ENCODE measurements at regions of chr15 and their contacts with region 1.

Region 1: GRCh38 chr15:76931397-76932007 is at the start of gene RCN2:
- DNase-seq: peak; percentile 98
- H3K4me3 Mint-ChIP-seq: peak within 1 kb of the TSS; percentile 81
- H3K27ac Mint-ChIP-seq: peak within 1 kb of the TSS; percentile 77
- H3K4me1 Mint-ChIP-seq: peaks cover 28% of the 10 kb centered on the region
- H3K27me3 Mint-ChIP-seq: peaks cover 14% of the 10 kb centered on the region
- total RNA-seq, gene RCN2: 35.1 and 40.5 TPM in 2 replicates

Region 2: DNA sequence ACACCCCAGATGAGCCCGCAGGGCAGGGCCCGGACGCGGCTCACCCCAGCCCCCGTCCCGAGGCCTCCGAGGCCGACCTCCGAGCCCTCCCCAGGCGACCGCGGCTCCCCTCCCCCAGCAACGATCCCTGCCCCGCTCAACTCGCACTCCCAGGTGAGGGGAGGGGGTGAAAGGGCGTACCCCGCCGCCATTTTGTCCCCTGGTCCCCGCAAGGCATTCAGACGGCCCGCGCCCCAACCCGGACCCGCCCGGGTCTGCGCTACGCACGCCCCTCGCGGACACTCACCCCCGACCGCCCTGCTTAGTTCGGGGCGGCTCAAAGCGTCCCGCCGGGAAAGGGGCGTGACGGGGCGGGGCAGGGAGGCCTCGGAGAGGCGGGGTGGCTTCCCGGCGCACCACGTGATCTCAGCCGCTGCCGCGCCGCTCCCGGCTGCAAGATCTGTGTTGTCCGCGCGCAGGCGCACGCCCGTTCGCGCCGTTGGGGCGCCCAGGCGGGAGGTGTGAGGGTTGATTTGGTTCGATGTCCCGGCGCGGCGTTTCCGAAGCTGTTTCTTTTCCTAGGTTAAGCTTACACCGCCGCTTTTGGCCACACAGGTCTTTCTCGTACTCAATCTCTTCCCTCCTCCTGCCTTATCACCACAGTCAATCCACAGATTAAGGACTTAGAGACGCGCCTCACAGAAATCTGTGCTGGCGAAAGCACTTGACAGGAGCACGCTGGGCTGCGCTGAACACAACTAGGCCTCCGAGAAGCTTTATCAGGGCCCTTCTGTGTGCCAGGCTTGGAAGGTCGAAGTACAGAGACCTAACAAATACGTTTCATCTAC is 26.3 kb before region 1 on chr15 and contains the start of gene SCAPER:
- intact Hi-C with region 1: loop called (anchors 1 kb)
- DNase-seq: peak; percentile 97
- H3K4me3 Mint-ChIP-seq: peak within 1 kb of the TSS; percentile 92
- H3K27ac Mint-ChIP-seq: peak within 1 kb of the TSS; percentile 91
- H3K4me1 Mint-ChIP-seq: peaks cover 30% of the 10 kb centered on the region
- H3K27me3 Mint-ChIP-seq: peaks cover 4% of the 10 kb centered on the region
- total RNA-seq, gene SCAPER: 24.3 and 31.0 TPM in 2 replicates

Region 3: DNA sequence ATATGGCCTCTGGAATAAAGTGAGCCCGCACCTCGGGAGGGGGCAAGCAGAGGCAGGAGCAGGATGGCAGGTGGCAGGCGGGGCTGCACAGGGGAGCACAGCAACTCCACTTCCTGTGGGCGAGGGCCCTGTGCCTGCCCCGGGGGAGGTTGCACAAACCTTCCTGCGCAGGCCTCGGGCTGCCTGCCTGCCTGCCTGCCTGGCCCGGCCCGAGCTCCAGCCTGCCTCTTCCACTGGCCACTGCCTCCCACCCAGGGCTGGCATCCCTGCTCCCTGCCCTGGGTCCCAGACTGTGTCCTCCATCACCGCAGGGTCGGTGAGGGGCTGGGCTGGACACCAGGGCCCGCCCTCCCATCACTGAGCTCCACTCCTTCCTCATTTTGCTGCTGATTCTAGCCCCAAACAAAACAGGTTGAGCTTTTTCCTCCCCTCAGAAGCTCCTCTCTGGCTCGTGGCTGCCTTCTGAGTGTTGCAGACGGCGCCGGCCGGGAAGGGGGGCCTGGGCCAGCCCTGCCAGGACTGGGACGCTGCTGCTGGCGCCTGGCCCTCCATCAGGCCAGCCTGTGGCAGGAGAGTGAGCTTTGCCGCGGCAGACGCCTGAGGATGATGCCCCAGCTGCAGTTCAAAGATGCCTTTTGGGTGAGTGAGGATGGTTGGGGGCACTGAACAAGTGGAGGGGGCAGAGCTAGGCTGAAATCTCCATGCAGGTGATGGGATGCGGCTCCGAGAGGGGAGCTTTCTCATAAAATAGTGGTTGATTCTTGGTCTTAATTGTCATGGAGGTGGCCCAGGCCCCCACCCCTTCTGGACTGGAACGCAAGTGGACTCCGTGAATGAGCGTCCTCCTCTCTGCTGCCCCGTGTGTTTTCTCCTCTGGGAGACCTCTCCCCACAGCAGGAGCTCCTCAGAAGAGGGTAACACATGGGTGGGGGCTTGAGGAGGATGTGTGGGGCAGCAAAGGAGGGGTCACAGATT is 63.8 kb after region 1 on chr15 and contains the start of gene PSTPIP1:
- intact Hi-C with region 1: loop called (anchors 5 kb)
- DNase-seq: peak; percentile 90
- H3K4me3 Mint-ChIP-seq: peak within 1 kb of the TSS; percentile 98
- H3K27ac Mint-ChIP-seq: peak within 1 kb of the TSS; percentile 96
- H3K4me1 Mint-ChIP-seq: peaks cover 62% of the 10 kb centered on the region
- H3K27me3 Mint-ChIP-seq: no peaks in the 10 kb centered on the region
- total RNA-seq, gene PSTPIP1: 182 and 186 TPM in 2 replicates